Activated CD8-positive, alpha-beta memory T cell treated with anti-CD3 and anti-CD28 coated beads, Interleukin-2, amount 10 ng/mL, durations not matched to agents 7 days and 5 days (primary cell): ENCODE measurements at regions of chr19 and their contacts with region 1.

Region 1: DNA sequence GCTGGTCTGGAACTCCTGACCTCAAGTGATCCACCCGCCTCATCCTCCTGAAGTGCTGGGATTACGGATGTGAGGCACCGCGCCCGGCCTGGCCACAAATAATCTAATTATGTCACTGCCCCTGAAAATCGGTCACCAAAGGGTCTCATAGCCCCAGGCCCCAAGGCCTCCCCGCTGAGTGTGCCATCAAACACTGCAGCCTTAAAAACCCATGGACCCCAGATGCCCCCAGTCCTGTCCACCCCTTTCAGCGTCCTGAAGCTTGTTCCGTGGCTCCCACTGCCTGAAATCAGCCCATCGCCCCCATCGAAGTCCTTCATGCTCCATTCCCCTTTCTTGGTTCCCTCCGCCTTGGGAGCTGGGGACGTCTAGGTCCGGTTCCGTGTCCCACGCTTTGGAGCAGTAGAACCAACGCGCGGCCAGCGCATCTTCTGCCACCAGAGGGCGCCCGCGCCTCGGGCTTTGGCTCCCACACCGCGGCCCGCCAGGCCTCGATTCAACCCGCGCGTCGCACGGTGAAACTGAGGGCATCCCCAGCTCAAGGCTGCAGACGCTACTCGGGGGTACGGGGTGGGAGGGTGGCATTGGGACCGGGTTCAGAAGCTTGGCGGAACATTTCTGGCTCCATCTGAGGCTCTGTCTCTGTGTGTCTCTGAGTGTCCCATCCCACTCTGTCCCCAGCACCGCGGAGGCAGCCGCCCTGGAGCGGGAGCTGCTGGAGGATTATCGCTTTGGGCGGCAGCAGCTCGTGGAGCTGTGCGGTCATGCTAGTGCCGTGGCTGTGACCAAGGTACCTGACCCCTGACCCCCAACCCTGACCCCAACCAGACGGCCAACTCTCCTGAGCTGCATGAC is 3.5 kb downstream of the YJEFN3 start:
- DNase-seq: peak; percentile 87
- ATAC-seq: peak; percentile 90
- H3K4me3 Mint-ChIP-seq: no peak overlapping the region
- H3K27ac Mint-ChIP-seq: peak overlapping the region; percentile 54
- H3K4me1 Mint-ChIP-seq: peaks cover 9% of the 10 kb centered on the region
- H3K27me3 Mint-ChIP-seq: peaks cover 3% of the 10 kb centered on the region

Region 2: GRCh38 chr19:19304186-19304965 is 227.8 kb before region 1 on chr19:
- CTCF ChIA-PET with region 1: no interaction called
- DNase-seq: no peak
- ATAC-seq: no peak
- H3K4me3 Mint-ChIP-seq: no peak overlapping the region
- H3K27ac Mint-ChIP-seq: no peak overlapping the region
- H3K4me1 Mint-ChIP-seq: no peaks in the 10 kb centered on the region
- H3K27me3 Mint-ChIP-seq: no peaks in the 10 kb centered on the region

Region 3: DNA sequence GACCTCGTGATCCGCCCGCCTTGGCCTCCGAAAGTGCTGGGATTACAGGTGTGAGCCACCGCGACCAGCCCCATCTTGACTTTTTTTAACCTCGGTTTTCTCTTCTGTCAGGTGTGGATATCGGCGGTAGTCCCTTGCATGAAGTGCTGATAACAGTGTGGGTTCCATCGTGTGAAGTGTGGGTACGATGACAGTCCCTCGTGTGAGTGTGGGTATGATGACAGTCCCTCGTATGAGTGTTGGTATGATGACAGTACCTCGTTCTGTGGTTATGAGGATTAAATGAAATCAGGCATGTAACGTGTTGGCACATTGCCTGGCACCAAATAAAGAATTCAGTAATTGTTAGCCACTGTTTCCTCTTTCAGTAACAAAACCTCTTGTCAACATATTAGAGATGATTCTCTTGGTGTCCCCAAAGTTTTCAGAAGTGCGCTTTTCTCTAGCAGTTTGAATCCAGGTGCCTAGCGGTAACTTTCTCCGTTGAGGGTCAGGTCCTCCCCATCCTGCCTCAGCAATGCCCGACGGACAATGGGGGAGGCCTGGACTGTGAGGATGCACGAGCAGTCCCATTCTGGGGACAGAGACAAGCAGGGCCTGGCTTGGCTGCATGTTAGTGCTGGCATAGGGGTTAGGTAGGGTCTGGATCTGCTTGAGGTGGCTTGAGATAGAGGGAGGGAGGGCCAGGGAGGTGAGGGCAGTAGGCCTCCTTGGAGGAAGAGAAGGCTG is 111.4 kb before region 1 on chr19:
- CTCF ChIA-PET with region 1: no interaction called
- DNase-seq: peak; percentile 59
- ATAC-seq: peak; percentile 61
- H3K4me3 Mint-ChIP-seq: no peak overlapping the region
- H3K27ac Mint-ChIP-seq: peak overlapping the region; percentile 67
- H3K4me1 Mint-ChIP-seq: peaks cover 51% of the 10 kb centered on the region
- H3K27me3 Mint-ChIP-seq: no peaks in the 10 kb centered on the region

Region 4: GRCh38 chr19:19495614-19496603 is 36.3 kb before region 1 on chr19:
- CTCF ChIA-PET with region 1: no interaction called
- DNase-seq: no peak
- ATAC-seq: no peak
- H3K4me3 Mint-ChIP-seq: no peak overlapping the region
- H3K27ac Mint-ChIP-seq: no peak overlapping the region
- H3K4me1 Mint-ChIP-seq: peaks cover 2% of the 10 kb centered on the region
- H3K27me3 Mint-ChIP-seq: no peaks in the 10 kb centered on the region

Region 5: GRCh38 chr19:19554074-19555023 is 22.2 kb after region 1 on chr19:
- CTCF ChIA-PET with region 1: interaction called, 119 read pairs
- DNase-seq: peak; percentile 70
- ATAC-seq: peak; percentile 61
- H3K4me3 Mint-ChIP-seq: no peak overlapping the region
- H3K27ac Mint-ChIP-seq: no peak overlapping the region
- H3K4me1 Mint-ChIP-seq: peaks cover 4% of the 10 kb centered on the region
- H3K27me3 Mint-ChIP-seq: no peaks in the 10 kb centered on the region

Region 6: DNA sequence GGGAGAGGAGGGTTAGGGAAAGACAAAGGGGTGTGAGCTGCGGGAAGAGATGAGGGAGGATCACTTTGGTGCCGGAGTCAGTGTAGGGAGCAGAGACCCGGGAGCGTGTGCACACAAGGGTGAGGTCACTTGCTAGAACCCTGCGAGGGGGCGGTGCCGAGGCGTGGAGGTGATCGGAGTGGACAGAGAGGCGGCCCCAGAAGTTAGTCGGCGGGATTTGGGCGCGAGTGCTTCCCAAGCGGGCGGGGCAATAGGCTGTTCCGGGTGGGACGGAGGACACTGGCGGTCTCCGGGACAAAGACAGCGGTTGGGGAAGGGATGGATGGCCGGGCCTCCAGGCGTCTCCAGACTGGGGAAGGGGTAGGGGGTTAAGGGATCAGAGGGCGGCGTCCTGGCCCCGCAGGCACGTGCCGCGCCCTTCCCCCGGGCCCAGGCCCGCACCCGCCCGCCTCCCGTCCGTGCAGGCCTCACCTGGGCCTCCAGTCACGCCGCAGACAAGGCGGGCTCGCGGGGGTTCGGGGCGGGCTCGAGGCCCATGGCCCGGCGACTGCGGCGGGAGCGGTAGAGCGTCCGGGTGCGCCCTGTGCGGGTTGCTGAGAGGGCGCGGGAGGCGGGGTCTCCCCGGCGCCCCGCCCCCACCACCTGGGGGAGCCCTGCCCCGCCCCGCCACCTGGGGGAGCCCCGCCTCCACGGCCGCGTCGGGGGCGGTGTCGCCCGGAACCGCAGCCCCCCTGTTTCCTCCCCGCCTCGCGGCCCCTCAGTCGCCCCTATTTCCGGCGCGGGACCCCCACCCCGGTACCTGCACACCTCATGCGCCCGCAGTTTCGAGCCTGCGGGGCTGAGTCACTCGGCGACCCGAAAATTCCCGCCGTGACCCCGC is 95.7 kb after region 1 on chr19 and contains the start of gene LPAR2:
- CTCF ChIA-PET with region 1: interaction called, 15 read pairs
- DNase-seq: peak; percentile 81
- ATAC-seq: peak; percentile 82
- H3K4me3 Mint-ChIP-seq: peak within 1 kb of the TSS; percentile 94
- H3K27ac Mint-ChIP-seq: peak within 1 kb of the TSS; percentile 93
- H3K4me1 Mint-ChIP-seq: peaks cover 37% of the 10 kb centered on the region
- H3K27me3 Mint-ChIP-seq: no peaks in the 10 kb centered on the region
- total RNA-seq, gene LPAR2: 39.4 to 46.1 TPM

Region 7: GRCh38 chr19:19651076-19651475 is 118.9 kb after region 1 on chr19:
- CTCF ChIA-PET with region 1: interaction called, 29 read pairs
- DNase-seq: no peak
- ATAC-seq: no peak
- H3K4me3 Mint-ChIP-seq: no peak overlapping the region
- H3K27ac Mint-ChIP-seq: no peak overlapping the region
- H3K4me1 Mint-ChIP-seq: no peaks in the 10 kb centered on the region
- H3K27me3 Mint-ChIP-seq: no peaks in the 10 kb centered on the region

Region 8: DNA sequence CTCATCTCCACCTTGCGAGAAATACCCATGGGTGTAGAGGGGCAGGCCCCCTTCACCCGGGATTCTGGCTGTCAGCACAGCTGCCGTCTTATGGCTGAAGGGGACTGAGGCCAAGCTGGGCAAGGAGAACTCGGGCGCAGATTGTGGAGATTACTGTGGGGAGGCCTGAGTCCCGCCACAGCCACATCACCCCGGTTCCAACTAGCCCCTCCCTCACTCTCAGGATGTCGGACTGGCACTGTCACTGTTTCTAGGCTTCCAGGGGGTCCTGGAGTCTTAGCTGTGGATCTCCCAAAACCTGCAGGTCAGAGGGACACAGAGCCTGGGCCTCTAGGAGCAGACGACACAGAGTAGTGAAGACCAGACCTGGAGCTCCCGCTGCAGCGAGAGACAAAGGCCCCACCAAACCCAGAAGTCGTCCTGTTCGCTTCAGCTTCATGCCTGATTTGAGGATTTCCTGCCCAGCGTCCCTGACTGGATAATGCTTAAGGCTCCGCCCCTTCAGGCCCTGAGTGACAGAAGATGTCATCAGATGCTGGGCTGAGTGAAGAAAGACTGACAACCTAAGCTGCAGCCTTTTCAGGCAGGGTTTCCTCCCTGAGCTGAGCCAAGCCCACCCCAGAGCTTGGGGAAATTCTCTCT is 424.4 kb after region 1 on chr19:
- CTCF ChIA-PET with region 1: interaction called, 13 read pairs
- DNase-seq: no peak
- ATAC-seq: no peak
- H3K4me3 Mint-ChIP-seq: no peak overlapping the region
- H3K27ac Mint-ChIP-seq: no peak overlapping the region
- H3K4me1 Mint-ChIP-seq: no peaks in the 10 kb centered on the region
- H3K27me3 Mint-ChIP-seq: no peaks in the 10 kb centered on the region